ENCODE measurements at regions of chr18 and their contacts with region 1.

Region 1: GRCh38 chr18:54224379-54225014 is at the start of gene MBD2:
- DNase-seq: peak; percentile 96
- H3K4me3 Mint-ChIP-seq: peak within 1 kb of the TSS; percentile 83
- H3K27ac Mint-ChIP-seq: peak within 1 kb of the TSS; percentile 83
- H3K4me1 Mint-ChIP-seq: peaks cover 9% of the 10 kb centered on the region
- H3K27me3 Mint-ChIP-seq: no peaks in the 10 kb centered on the region
- CTCF ChIP-seq: no peak
- total RNA-seq, gene MBD2: 103 and 106 TPM in 2 replicates

Region 2: DNA sequence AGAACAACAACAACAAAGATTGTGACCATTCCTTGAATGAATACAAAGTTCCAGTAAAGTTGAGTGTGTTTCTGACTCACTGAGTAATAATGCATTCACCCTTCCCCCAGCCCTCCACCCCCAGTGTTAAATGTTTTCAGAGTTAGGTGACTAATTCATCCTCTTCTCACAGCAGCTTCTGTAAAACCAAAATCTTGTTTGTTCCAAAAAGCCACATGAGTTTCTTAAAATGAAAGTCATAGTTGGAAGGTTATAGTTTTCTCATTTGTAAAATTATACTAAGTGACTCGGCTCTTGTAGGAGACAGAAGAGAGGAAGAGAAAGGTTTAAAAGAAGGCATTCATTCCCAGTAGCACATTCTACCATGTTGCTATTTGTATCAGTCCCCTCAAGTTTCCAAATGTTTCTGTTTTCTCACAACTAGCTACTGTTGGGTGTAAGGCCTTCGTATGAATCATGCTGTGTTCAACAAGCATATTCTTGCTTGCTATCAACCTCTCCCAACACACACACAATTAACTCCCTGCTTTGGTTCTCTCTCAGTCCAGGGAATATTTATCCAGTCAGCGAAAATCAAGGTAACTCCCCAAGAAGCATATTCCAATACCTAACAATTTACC is 75.3 kb before region 1 on chr18:
- CTCF ChIA-PET with region 1: no interaction called
- intact Hi-C with region 1: loop called (anchors 2 kb)
- DNase-seq: peak; percentile 58
- H3K4me3 Mint-ChIP-seq: peak overlapping the region; percentile 37
- H3K27ac Mint-ChIP-seq: peak overlapping the region; percentile 79
- H3K4me1 Mint-ChIP-seq: peaks cover 46% of the 10 kb centered on the region
- H3K27me3 Mint-ChIP-seq: no peaks in the 10 kb centered on the region
- CTCF ChIP-seq: no peak

Region 3: DNA sequence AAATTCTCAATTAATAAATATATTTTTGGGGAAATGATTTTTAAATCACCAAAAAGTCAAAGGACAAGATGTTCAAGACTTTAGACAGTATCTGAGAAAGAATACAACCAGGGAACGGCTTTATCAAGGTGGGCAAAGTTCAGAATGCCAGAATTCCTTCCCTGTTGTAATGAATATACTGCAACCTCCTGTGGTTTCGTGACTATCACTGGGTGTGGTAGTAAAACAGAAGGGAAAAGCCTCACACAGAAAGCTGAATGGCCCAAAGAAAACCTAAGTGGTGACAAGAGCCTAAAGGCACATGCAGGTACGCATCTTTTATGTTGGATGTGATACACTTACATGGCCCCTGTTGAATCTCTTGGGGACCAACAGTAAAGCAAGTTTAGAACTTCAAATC is 37.1 kb before region 1 on chr18:
- CTCF ChIA-PET with region 1: no interaction called
- intact Hi-C with region 1: loop called (anchors 5 kb)
- DNase-seq: no peak
- H3K4me3 Mint-ChIP-seq: no peak overlapping the region
- H3K27ac Mint-ChIP-seq: no peak overlapping the region
- H3K4me1 Mint-ChIP-seq: peaks cover 13% of the 10 kb centered on the region
- H3K27me3 Mint-ChIP-seq: no peaks in the 10 kb centered on the region
- CTCF ChIP-seq: no peak

Region 4: DNA sequence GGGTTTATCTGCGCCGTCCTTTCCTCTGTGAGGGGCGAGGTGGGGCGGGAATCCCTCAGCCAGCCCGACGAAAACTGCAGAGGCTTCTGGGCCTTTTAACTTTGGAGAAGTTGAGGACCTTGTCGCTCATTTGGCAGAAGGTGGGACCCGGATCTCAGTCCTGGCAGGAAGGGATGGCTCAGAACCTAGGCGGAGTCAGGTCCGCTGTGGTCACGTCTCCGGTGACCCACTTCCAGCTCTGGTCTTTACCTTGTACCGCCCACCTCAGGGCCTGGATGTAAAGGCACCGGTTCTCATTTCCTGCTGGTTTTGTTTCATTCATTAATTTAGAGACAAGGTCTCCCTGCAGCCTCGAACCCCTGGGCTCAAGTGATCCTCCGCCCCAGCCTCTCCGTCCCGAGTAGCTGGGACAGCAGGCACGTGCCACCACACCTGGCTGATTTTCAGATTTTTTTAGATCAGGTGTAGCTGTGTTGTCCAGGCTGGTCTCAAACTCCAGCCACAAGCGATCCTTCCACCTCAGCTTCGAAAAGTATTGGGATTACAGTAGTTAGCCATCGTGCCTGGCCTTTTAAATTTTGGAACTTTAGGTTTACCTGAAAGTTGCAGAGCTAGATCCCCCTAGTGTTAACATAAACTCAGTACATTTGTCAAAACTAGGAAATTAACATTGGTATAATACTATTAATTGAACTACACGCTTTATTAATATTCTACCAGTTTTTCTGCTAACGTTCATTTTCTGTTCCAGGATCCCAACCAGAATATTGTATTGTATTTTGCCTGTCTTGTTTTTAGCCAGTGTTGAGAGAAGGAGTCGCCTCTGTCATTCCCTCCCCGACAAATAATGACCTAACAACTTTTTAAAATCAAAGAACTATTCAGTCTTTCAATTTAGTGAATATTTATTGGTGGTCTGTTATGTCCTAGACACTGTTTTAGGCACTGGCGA is 45.7 kb after region 1 on chr18:
- CTCF ChIA-PET with region 1: interaction called, 24 read pairs
- intact Hi-C with region 1: loop called (anchors 2 kb)
- DNase-seq: peak; percentile 40
- H3K4me3 Mint-ChIP-seq: peak overlapping the region; percentile 83
- H3K27ac Mint-ChIP-seq: peak overlapping the region; percentile 92
- H3K4me1 Mint-ChIP-seq: peaks cover 7% of the 10 kb centered on the region
- H3K27me3 Mint-ChIP-seq: no peaks in the 10 kb centered on the region
- CTCF ChIP-seq: no peak

Measured in Calu3 (cell line).